ENCODE measurements at regions of chr9 and their contacts with region 1.

Region 1: GRCh38 chr9:121725008-121725775 is 73.8 kb downstream of the DAB2IP start:
- DNase-seq: peak; percentile 94 to 98
- ATAC-seq: peak; percentile 90 to 95 (median 92)
- H3K4me3 ChIP-seq: no peak overlapping the region
- H3K27ac ChIP-seq: peak overlapping the region; percentile 81
- H3K4me1 ChIP-seq: peaks cover 90% of the 10 kb centered on the region
- H3K27me3 ChIP-seq: no peaks in the 10 kb centered on the region
- CTCF ChIP-seq: no peak

Region 2: DNA sequence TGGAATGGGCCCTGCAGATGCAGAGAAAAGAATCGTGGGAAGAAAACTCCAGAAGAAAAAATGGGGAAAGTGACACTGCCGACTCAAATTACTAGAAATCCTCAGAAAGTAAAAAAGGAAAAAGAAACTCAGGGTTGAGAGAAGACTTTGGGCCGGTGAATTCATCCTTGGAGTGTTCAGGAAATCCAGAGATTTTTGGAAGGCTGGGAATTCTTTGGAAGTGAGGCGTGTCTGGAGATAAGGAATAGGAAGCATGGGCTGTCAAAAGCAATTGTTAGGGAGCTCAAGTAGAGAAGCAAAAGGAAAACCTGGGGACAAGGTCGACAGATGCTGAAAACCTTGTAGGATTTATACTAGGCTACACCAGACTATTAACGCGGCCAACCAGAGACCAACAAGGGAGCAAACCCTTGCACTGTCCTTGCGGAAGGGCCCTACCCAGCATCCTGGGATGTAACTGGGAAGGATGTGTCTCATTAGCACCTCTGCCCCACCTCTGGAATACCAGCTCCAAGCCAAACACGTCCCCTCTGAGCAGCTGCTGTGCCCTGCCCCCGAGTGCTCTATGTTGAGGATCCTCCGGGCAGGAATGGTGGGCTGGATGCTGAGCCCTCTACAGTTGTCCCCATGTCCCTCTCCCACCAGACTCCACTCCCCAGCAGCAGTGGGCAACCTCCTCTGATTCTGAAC is 62.2 kb before region 1 on chr9:
- intact Hi-C with region 1: loop called in 1 of 2 experiments (anchors 10 kb)
- DNase-seq: peak in 1 of 2 donors; percentile 34
- ATAC-seq: peak in 3 of 4 donors; percentile 8 to 17 (median 9)
- H3K4me3 ChIP-seq: no peak overlapping the region
- H3K27ac ChIP-seq: no peak overlapping the region
- H3K4me1 ChIP-seq: peaks cover 36% of the 10 kb centered on the region
- H3K27me3 ChIP-seq: no peaks in the 10 kb centered on the region
- CTCF ChIP-seq: no peak

Region 3: GRCh38 chr9:121698627-121699570 is 26.3 kb before region 1 on chr9:
- intact Hi-C with region 1: no loop called
- DNase-seq: peak; percentile 68 to 79
- ATAC-seq: no peak
- H3K4me3 ChIP-seq: peak overlapping the region; percentile 66
- H3K27ac ChIP-seq: peak overlapping the region; percentile 79
- H3K4me1 ChIP-seq: peaks cover 28% of the 10 kb centered on the region
- H3K27me3 ChIP-seq: no peaks in the 10 kb centered on the region
- CTCF ChIP-seq: no peak

Region 4: DNA sequence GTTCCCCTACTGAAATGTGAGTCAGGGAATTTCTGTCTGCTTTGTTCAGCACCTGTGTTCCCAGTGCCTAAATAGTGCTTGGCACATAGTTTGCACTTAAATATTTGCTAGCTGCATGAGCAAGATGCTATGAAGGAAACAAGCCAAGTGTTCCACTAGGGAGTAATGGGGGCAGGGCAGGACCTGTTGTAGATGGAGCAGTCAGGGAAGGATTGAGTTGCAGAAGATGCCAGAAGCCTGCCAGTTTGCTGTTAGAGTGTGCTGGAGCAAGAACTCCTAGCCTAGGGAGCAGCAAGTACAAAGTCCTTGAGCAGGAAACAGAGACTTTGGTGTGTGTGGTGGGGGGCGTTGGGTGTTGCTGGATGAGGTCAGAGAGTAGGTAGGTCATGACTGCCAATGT is 13.8 kb after region 1 on chr9:
- intact Hi-C with region 1: loop called in 1 of 2 experiments (anchors 2 kb)
- DNase-seq: no peak
- ATAC-seq: peak; percentile 46 to 66 (median 60)
- H3K4me3 ChIP-seq: no peak overlapping the region
- H3K27ac ChIP-seq: peak overlapping the region; percentile 80
- H3K4me1 ChIP-seq: peaks cover 92% of the 10 kb centered on the region
- H3K27me3 ChIP-seq: no peaks in the 10 kb centered on the region
- CTCF ChIP-seq: no peak

Region 5: DNA sequence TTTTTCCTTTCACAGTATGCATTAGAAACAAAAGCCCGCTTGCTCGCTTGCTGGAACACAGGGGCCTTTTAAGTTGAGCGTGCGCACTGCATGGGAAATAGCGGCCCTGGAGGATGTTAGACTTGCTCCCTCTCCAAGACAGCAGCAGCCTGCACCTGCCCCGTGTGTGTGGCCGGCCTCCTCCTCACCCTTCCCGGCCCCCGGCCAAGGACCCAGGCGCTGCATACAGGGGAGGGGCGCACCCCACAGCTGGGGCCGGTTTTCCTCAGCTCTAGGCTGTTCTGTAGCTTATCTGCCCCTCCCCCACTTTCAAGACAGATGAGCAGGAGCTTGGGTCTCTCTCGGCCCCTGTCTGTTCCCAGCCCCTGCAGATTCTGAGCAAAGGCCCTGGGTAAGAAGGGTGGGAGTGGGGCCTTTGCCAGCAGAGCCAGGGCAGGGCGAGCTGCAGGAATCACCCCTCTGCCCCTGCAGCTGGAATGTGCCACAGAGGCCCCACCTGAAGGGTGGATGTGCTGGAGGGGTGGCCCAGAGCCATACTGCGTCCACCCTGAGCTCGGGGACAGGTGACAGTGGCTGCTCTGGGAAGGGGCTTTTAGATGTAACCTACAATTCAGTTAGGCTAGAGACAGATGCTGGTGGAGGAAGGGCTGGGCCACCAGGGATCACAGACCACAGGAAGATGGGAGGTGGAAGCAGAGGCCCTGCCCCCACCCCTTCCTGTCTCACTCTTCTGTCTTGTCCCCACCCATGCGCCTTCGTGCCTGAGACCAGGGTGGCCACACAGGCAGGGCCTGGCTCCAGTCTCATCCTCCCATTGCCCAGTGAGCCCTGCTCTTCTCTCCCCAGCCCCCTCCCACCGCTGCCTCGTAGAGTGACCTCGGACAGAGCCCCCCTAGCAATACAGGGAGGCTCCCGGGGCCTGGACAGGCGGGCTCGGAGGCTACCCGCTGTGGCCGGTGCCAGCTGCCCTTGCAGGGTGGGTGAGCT is 58.6 kb after region 1 on chr9:
- intact Hi-C with region 1: no loop called
- DNase-seq: no peak
- ATAC-seq: no peak
- H3K4me3 ChIP-seq: no peak overlapping the region
- H3K27ac ChIP-seq: peak overlapping the region; percentile 2
- H3K4me1 ChIP-seq: no peaks in the 10 kb centered on the region
- H3K27me3 ChIP-seq: no peaks in the 10 kb centered on the region
- CTCF ChIP-seq: no peak